Left cardiac atrium (tissue), 4 donors: ENCODE measurements at regions of chr7 and their contacts with region 1.

Region 1: DNA sequence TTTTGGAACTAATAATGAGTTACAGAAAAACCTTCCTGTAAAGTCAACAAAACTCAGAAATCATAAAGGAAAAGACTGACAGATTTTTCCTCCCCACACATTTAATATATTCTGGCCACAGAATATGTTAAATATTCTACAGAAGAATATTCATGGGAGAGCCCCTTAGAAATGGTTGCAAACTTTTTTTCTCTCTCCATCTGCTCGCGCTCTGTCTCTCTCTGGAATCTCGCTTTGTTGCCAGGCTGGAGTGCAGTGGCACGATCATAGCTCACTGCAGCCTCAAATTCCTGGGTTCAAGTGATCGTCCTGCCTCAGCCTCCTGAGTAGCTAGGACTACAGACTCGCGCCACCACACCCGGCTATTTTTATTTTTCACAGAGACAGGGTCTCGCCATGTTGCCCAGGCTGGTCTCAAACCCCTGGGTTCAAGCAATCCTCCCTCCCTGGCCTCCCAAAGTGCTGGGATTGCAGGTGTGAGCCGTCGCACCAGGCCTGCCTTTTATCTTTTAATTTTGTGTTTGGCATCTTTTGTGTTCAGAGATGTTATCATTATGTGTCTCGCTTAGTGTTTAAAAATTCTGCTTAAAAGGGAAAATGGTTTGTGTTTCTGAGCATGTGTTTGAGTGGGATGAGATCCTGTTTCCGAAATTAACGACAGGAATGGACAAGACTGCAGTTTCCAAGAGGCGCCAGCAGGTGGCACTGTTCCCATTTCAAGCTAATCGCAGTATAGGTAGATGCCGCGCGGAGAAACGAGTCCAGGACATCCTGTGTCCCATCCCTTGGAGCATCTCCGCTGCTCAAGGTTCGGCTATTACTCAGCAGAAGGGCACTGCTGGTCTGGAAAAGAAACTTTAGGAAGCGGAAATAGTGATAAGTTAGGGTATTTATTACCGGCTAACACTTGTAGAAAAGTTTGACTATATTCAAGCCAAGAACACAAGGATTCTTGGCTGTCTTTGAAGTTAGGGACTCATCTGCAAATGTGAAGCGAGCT is 23.1 kb upstream of the ST7 start:
- DNase-seq: peak; percentile 81
- ATAC-seq: peak; percentile 90 to 93

Region 2: DNA sequence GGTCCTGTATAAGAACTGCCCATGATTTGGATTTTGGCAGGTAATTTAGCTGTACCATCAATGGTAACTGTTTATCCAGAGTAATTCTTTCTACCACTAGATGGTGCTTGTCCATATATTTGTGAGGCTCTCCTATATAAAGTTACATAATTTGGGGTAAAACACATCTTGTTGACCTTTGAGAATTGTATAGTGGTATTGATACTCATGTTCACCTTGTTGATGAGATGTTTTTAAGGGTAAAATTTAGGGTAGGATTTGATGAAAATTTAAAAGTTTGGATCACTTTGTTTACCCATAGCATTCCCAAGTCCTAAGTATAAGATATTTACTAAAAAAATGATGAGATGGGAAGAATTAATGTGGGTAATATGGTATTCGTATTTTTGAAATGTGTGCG is 54.7 kb after region 1 on chr7:
- intact Hi-C with region 1: loop called in 1 of 2 experiments (anchors 10 kb)
- DNase-seq: no peak
- ATAC-seq: peak in 1 of 2 donors; percentile 62

Region 3: GRCh38 chr7:117047496-117047895 is 117.3 kb after region 1 on chr7:
- intact Hi-C with region 1: no loop called
- DNase-seq: no peak
- ATAC-seq: no peak

Region 4: DNA sequence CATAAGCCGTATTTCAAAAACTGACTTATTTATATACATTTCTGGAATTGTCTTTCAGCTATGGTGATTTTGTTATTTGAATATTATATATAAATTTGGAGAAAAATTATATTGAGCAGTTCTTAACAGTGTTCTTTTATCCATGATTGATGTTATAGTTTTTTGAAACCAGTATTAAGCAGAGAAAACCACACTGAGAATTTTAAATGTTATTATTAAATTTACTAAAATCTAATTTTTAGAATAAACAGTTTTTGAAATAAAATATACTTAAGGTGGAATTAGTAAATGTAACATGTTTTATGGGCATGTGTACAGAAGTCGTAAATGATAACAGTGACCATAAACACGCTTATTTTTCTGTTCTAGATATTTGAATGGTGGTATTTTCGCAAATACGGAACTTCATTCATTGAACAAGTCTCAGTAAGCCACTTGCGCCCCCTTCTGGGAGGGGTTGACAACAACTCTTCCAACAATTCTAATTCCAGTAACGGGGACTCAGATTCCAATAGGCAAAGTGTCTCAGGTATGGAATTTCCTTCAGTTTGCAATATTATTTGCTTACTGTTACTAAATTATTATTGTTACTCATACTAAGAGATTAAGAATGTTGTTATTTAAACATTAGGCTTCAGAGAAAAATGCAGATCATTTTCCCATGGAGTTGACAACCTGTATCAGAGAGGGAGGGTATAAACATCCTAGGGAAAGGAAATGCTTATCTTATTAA is 189.1 kb after region 1 on chr7:
- intact Hi-C with region 1: loop called (anchors 2 to 5 kb)
- DNase-seq: peak; percentile 78
- ATAC-seq: peak in 1 of 2 donors; percentile 53

Region 5: GRCh38 chr7:117127585-117128168 is 197.5 kb after region 1 on chr7:
- intact Hi-C with region 1: loop called in 1 of 2 experiments (anchors 5 kb)
- DNase-seq: peak; percentile 52
- ATAC-seq: peak in 1 of 2 donors; percentile 33